ENCODE measurements at regions of chr1 and their contacts with region 1.

Region 1: DNA sequence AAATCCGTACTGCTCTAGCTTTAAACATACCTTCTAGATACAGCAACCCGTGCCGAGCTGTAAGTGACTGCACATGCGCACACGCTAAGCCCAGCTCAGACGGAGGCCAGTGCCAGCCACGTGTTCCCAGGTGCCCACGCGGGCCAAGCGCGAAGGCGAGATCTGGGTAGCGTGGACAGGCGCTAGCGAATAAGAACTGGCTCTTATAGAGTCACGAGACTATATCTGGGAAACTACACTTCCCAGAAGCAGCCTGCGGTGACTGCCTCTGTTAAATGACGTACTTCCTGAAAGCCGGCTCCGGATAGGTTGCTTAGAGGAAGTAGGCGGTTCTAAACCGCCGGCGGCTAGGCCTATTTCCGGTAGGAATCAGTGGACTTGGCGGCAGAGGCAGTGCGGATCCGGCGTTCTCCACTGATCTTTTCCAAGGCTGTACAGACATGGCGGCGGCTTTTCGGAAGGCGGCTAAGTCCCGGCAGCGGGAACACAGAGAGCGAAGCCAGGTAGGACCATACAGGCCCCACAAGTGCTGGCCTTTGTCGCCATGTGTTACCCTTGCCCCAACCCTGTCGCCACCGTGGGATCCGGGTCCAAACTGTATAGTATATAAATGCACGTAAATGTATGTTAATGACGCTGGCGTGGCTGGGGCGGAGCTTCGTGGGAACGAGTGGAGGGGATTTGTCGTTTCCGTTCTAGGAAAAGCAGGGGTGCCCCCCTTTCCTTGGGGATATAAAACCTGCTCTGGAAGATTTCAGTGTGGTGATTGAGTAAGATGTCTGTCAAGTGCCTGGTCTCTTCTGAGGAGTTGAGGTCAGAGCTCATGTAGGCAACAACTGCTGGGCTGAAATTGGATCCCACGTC is at the start of gene UTP11:
- DNase-seq: peak; percentile 86 to 95
- H3K4me3 ChIP-seq: peak within 1 kb of the TSS; percentile 87 to 96 (median 90)
- H3K27ac ChIP-seq: peak within 1 kb of the TSS; percentile 85
- H3K4me1 ChIP-seq: peaks cover 0 to 9% (median 5%) of the 10 kb centered on the region in 4 experiments; a peak in 5 of 7 replicates
- H3K27me3 ChIP-seq: peaks cover 0 to 2% (median 0%) of the 10 kb centered on the region in 4 experiments; a peak in 1 of 7 replicates
- CTCF ChIP-seq: no peak; a peak in 1 of 4 replicates
- EP300 ChIP-seq: no peak
- POLR2A ChIP-seq: peak; percentile 68 to 84
- RAD21 ChIP-seq: no peak
- total RNA-seq, gene UTP11: 56.4 and 60.5 TPM in 2 replicates

Region 2: GRCh38 chr1:37764414-37764825 is 248.2 kb before region 1 on chr1:
- CTCF ChIA-PET with region 1: no interaction called
- POLR2A ChIA-PET with region 1: no interaction called
- DNase-seq: peak in 1 of 2 experiments; percentile 94
- H3K4me3 ChIP-seq: peak overlapping the region in 3 of 4 experiments; percentile 42 to 57 (median 47); a peak in 6 of 8 replicates
- H3K27ac ChIP-seq: no peak overlapping the region
- H3K4me1 ChIP-seq: peaks cover 6 to 13% (median 10%) of the 10 kb centered on the region in 4 experiments; a peak in 6 of 7 replicates
- H3K27me3 ChIP-seq: peaks cover 15 to 74% (median 59%) of the 10 kb centered on the region in 4 experiments
- CTCF ChIP-seq: no peak
- EP300 ChIP-seq: no peak
- POLR2A ChIP-seq: no peak
- RAD21 ChIP-seq: 0 out of 4 replicates have a peak, but pooled peaks of 1 of the 2 experiments have one; percentile 9

Region 3: GRCh38 chr1:37989361-37989930 is 23.1 kb before region 1 on chr1:
- CTCF ChIA-PET with region 1: interaction called, 211 read pairs
- POLR2A ChIA-PET with region 1: interaction called, 28 read pairs
- DNase-seq: no peak
- H3K4me3 ChIP-seq: peak overlapping the region; percentile 66 to 98 (median 95)
- H3K27ac ChIP-seq: peak overlapping the region; percentile 79
- H3K4me1 ChIP-seq: no peaks in the 10 kb centered on the region; a peak in 1 of 7 replicates
- H3K27me3 ChIP-seq: no peaks in the 10 kb centered on the region
- CTCF ChIP-seq: no peak
- EP300 ChIP-seq: no peak
- POLR2A ChIP-seq: 0 out of 3 replicates have a peak, but pooled peaks of 1 of the 2 experiments have one; percentile 24
- RAD21 ChIP-seq: no peak

Region 4: GRCh38 chr1:37995751-37996345 is 16.7 kb before region 1 on chr1:
- CTCF ChIA-PET with region 1: interaction called, 211 read pairs
- POLR2A ChIA-PET with region 1: interaction called, 28 read pairs
- DNase-seq: peak; percentile 87 to 89
- H3K4me3 ChIP-seq: peak overlapping the region; percentile 39 to 65 (median 58)
- H3K27ac ChIP-seq: peak overlapping the region; percentile 86
- H3K4me1 ChIP-seq: peaks cover 0 to 29% (median 24%) of the 10 kb centered on the region in 4 experiments; a peak in 6 of 7 replicates
- H3K27me3 ChIP-seq: no peaks in the 10 kb centered on the region; a peak in 1 of 7 replicates
- CTCF ChIP-seq: no peak
- EP300 ChIP-seq: peak in 1 of 2 experiments; percentile 75; a peak in 1 of 3 replicates
- POLR2A ChIP-seq: peak; percentile 87 to 90
- RAD21 ChIP-seq: peak in 1 of 2 experiments; percentile 0; a peak in 1 of 4 replicates

Measured in H1 (cell line).